B cell (primary cell): ENCODE measurements at regions of chr5 and their contacts with region 1.

Region 1: GRCh38 chr5:43556857-43557542 is at the start of gene PAIP1:
- DNase-seq: peak; percentile 95
- ATAC-seq: peak; percentile 73
- H3K4me3 ChIP-seq: peak within 1 kb of the TSS; percentile 66 to 83 (median 79)
- H3K4me3 Mint-ChIP-seq: peak within 1 kb of the TSS; percentile 93
- H3K27ac ChIP-seq: peak within 1 kb of the TSS; percentile 81 to 91
- H3K27ac Mint-ChIP-seq: peak within 1 kb of the TSS; percentile 92
- H3K4me1 ChIP-seq: peaks cover 14 to 31% of the 10 kb centered on the region in 2 donors
- H3K4me1 Mint-ChIP-seq: peaks cover 16% of the 10 kb centered on the region
- H3K27me3 ChIP-seq: no peaks in the 10 kb centered on the region
- H3K27me3 Mint-ChIP-seq: no peaks in the 10 kb centered on the region
- CTCF ChIP-seq: peak; percentile 87
- total RNA-seq, gene PAIP1: 31.8 and 35.9 TPM in 2 replicates

Region 2: GRCh38 chr5:43040287-43041098 is 516.5 kb before region 1 on chr5 and contains the start of gene ANXA2R:
- CTCF ChIA-PET with region 1: no interaction called
- POLR2A ChIA-PET with region 1: no interaction called
- intact Hi-C with region 1: loop called (anchors 2 kb)
- DNase-seq: peak; percentile 97
- ATAC-seq: peak; percentile 60
- H3K4me3 ChIP-seq: peak within 1 kb of the TSS; percentile 62 to 95 (median 81)
- H3K4me3 Mint-ChIP-seq: peak within 1 kb of the TSS; percentile 97
- H3K27ac ChIP-seq: peak within 1 kb of the TSS; percentile 98 to 99
- H3K27ac Mint-ChIP-seq: peak within 1 kb of the TSS; percentile 98
- H3K4me1 ChIP-seq: peaks cover 25 to 44% of the 10 kb centered on the region in 2 donors
- H3K4me1 Mint-ChIP-seq: peaks cover 39% of the 10 kb centered on the region
- H3K27me3 ChIP-seq: no peaks in the 10 kb centered on the region
- H3K27me3 Mint-ChIP-seq: no peaks in the 10 kb centered on the region
- CTCF ChIP-seq: peak; percentile 86
- total RNA-seq, gene ANXA2R: 19.3 and 20.0 TPM in 2 replicates

Region 3: GRCh38 chr5:43396762-43397304 is 160.2 kb before region 1 on chr5:
- CTCF ChIA-PET with region 1: no interaction called
- POLR2A ChIA-PET with region 1: no interaction called
- intact Hi-C with region 1: loop called (anchors 5 kb)
- DNase-seq: peak; percentile 82
- ATAC-seq: peak; percentile 96
- H3K4me3 ChIP-seq: peak overlapping the region; percentile 65 to 89 (median 77)
- H3K4me3 Mint-ChIP-seq: peak overlapping the region; percentile 95
- H3K27ac ChIP-seq: peak overlapping the region; percentile 81 to 83
- H3K27ac Mint-ChIP-seq: peak overlapping the region; percentile 93
- H3K4me1 ChIP-seq: peaks cover 9 to 10% of the 10 kb centered on the region in 2 donors
- H3K4me1 Mint-ChIP-seq: peaks cover 21% of the 10 kb centered on the region
- H3K27me3 ChIP-seq: no peaks in the 10 kb centered on the region
- H3K27me3 Mint-ChIP-seq: no peaks in the 10 kb centered on the region
- CTCF ChIP-seq: no peak

Region 4: DNA sequence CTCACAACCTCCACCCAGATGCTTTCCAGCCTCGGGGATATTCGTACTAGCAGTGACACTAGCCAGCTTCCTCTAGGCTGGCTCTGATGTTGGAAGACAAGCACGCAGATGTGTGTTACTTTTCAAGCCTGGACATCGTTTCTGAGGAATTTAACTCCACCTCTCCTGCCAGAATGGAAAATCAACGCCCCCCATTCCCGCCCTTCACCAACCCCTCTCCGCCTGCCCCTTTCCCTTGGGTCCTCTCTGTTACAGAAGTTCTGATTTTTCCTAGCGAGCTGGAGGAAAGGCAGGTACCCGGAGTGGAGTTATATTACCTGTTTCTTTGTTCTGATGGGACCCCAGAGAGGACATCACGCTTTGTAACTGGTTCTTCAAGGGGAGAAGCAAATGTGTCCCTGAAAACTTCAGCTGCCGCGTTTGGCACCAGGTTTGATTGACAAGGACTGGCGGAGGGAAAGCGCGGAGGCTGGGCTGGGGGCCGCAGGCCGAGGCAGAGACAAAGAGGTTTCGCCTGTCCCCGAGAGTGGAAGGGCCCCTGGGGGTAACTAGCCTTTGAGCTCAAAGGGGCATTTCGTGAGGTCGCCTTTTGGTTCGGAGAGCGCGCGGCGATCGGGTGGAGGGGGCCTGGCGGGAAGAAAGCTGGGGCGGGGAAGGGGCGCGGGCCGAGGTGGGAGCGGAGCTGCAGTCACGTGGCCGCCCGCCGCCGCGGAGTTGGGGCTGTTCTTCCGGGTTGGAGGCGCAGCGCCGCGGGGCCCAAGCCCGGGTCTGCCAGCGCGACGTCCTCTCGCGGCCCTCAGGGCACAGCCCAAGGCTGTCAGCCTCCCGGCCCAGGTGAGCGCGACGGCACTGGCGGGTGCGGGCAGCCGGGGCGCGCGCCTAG is 45.7 kb after region 1 on chr5 and contains the start of gene NNT:
- CTCF ChIA-PET with region 1: interaction called, 20 read pairs
- POLR2A ChIA-PET with region 1: interaction called, 18 read pairs
- intact Hi-C with region 1: loop called (anchors 1 kb)
- DNase-seq: peak; percentile 83
- ATAC-seq: peak; percentile 71
- H3K4me3 ChIP-seq: peak within 1 kb of the TSS; percentile 65 to 99 (median 80)
- H3K4me3 Mint-ChIP-seq: peak within 1 kb of the TSS; percentile 95
- H3K27ac ChIP-seq: peak within 1 kb of the TSS; percentile 75 to 89
- H3K27ac Mint-ChIP-seq: peak within 1 kb of the TSS; percentile 91
- H3K4me1 ChIP-seq: peaks cover 16 to 24% of the 10 kb centered on the region in 2 donors
- H3K4me1 Mint-ChIP-seq: peaks cover 34% of the 10 kb centered on the region
- H3K27me3 ChIP-seq: no peaks in the 10 kb centered on the region
- H3K27me3 Mint-ChIP-seq: no peaks in the 10 kb centered on the region
- CTCF ChIP-seq: no peak
- total RNA-seq, gene NNT: 61.1 and 63.0 TPM in 2 replicates